ENCODE measurements at regions of chr19 and their contacts with region 1.

Region 1: GRCh38 chr19:53195265-53195903 is 2.2 kb upstream of the ZNF665 start:
- DNase-seq: peak; percentile 79 to 82 (median 80)
- H3K4me3 ChIP-seq: no peak overlapping the region
- H3K4me3 Mint-ChIP-seq: peak overlapping the region; percentile 26 to 99 (median 60)
- H3K27ac ChIP-seq: no peak overlapping the region
- H3K27ac Mint-ChIP-seq: peak overlapping the region; percentile 39 to 93 (median 75)
- H3K4me1 ChIP-seq: peaks cover 17% of the 10 kb centered on the region
- H3K4me1 Mint-ChIP-seq: peaks cover 20 to 60% (median 37%) of the 10 kb centered on the region in 4 donors
- H3K27me3 ChIP-seq: no peaks in the 10 kb centered on the region
- H3K27me3 Mint-ChIP-seq: peaks cover 0 to 1% of the 10 kb centered on the region in 2 donors

Region 2: GRCh38 chr19:52734893-52735661 is 460.3 kb before region 1 on chr19 and contains the start of gene ZNF611:
- CTCF ChIA-PET with region 1: no interaction called
- POLR2A ChIA-PET with region 1: no interaction called
- intact Hi-C with region 1: loop called (anchors 1 kb)
- DNase-seq: peak; percentile 98 to 99 (median 98)
- H3K4me3 ChIP-seq: peak within 1 kb of the TSS; percentile 94 to 98
- H3K4me3 Mint-ChIP-seq: peak within 1 kb of the TSS; percentile 90 to 97 (median 94)
- H3K27ac ChIP-seq: peak within 1 kb of the TSS; percentile 80
- H3K27ac Mint-ChIP-seq: peak within 1 kb of the TSS; percentile 94 to 98 (median 97)
- H3K4me1 ChIP-seq: peaks cover 22% of the 10 kb centered on the region
- H3K4me1 Mint-ChIP-seq: peaks cover 17 to 34% (median 25%) of the 10 kb centered on the region in 4 donors
- H3K27me3 ChIP-seq: no peaks in the 10 kb centered on the region
- H3K27me3 Mint-ChIP-seq: no peaks in the 10 kb centered on the region
- total RNA-seq, gene ZNF611: 52.8 to 53.7 TPM

Region 3: DNA sequence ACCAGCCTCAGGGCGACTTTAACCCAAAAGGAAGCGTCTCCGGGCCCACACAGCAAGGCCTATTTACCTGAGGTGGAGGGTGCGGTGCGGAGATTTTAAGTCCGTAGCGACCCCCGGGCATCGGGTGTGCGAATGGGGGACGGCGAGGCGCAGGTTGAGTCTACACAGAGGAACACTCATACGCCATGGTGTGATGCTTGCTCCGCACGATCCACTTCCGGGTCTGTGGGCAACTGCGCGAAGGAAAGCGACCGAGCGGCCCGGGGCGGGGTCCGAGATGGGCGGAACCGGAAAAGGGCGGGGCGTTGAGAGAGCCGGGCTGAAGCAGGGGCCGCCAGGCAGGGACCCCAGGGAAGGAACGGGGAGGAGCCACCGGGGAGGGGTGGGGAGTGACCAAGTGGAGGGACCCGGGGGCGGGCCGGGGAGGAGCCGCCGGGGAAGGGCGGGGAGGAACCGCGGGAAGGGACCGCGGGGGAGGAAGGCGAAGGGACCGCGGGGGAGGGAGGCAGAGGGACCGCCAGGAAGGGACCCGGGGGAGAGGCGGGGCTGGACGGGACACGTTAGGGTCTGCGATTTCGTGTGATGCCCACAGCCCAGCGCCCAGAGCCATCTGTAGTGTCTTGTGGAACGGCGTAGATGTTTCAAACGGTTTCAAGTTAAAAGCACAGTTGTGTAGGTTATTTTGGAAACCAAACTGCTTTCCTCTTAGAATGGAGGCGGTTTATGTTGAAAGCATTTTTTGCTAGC is 92.0 kb before region 1 on chr19 and contains the start of gene ZNF160:
- CTCF ChIA-PET with region 1: no interaction called
- POLR2A ChIA-PET with region 1: no interaction called
- intact Hi-C with region 1: loop called (anchors 1 kb)
- DNase-seq: peak; percentile 97 to 98 (median 97)
- H3K4me3 ChIP-seq: peak within 1 kb of the TSS; percentile 92 to 96
- H3K4me3 Mint-ChIP-seq: peak within 1 kb of the TSS; percentile 87 to 96 (median 95)
- H3K27ac ChIP-seq: peak within 1 kb of the TSS; percentile 84
- H3K27ac Mint-ChIP-seq: peak within 1 kb of the TSS; percentile 91 to 98 (median 95)
- H3K4me1 ChIP-seq: peaks cover 27% of the 10 kb centered on the region
- H3K4me1 Mint-ChIP-seq: peaks cover 20 to 46% (median 32%) of the 10 kb centered on the region in 4 donors
- H3K27me3 ChIP-seq: no peaks in the 10 kb centered on the region
- H3K27me3 Mint-ChIP-seq: no peaks in the 10 kb centered on the region
- total RNA-seq, gene ZNF160: 72.0 to 81.1 TPM

Region 4: DNA sequence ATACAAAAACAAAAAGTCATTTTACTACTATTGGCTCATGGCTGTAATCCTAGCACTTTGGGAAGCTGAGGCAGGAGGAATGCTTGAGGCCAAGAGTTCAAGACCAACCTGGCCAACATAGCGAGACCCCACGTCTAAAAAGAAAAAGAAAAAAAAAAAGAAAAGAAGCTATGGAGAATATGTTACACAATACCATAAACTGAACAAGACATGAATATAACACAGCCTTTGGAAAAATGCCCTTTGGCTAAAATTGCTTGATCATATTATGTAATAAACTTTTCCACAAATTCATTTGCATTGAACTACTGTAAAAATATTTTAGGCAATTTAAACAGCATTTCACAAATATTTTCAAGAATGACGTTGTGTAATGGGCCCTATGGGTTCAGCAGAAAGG is 59.0 kb before region 1 on chr19:
- CTCF ChIA-PET with region 1: no interaction called
- POLR2A ChIA-PET with region 1: no interaction called
- intact Hi-C with region 1: no loop called
- DNase-seq: no peak
- H3K4me3 ChIP-seq: no peak overlapping the region
- H3K4me3 Mint-ChIP-seq: no peak overlapping the region
- H3K27ac ChIP-seq: no peak overlapping the region
- H3K27ac Mint-ChIP-seq: no peak overlapping the region
- H3K4me1 ChIP-seq: no peaks in the 10 kb centered on the region
- H3K4me1 Mint-ChIP-seq: peaks cover 0 to 8% (median 4%) of the 10 kb centered on the region in 4 donors
- H3K27me3 ChIP-seq: no peaks in the 10 kb centered on the region
- H3K27me3 Mint-ChIP-seq: peaks cover 3 to 4% of the 10 kb centered on the region in 2 donors

Region 5: GRCh38 chr19:53333463-53334449 is 138.4 kb after region 1 on chr19 and contains the start of gene ZNF845:
- CTCF ChIA-PET with region 1: interaction called, 4 read pairs
- POLR2A ChIA-PET with region 1: interaction called, 4 read pairs
- intact Hi-C with region 1: loop called (anchors 1 kb)
- DNase-seq: peak; percentile 93 to 99 (median 95)
- H3K4me3 ChIP-seq: peak within 1 kb of the TSS; percentile 90 to 99
- H3K4me3 Mint-ChIP-seq: peak within 1 kb of the TSS; percentile 89 to 98 (median 95)
- H3K27ac ChIP-seq: peak within 1 kb of the TSS; percentile 64
- H3K27ac Mint-ChIP-seq: peak within 1 kb of the TSS; percentile 89 to 97 (median 94)
- H3K4me1 ChIP-seq: peaks cover 14% of the 10 kb centered on the region
- H3K4me1 Mint-ChIP-seq: peaks cover 13 to 35% (median 21%) of the 10 kb centered on the region in 4 donors
- H3K27me3 ChIP-seq: no peaks in the 10 kb centered on the region
- H3K27me3 Mint-ChIP-seq: peaks cover 4% of the 10 kb centered on the region in 2 donors
- total RNA-seq, gene ZNF845: 18.0 to 19.4 TPM

Region 6: DNA sequence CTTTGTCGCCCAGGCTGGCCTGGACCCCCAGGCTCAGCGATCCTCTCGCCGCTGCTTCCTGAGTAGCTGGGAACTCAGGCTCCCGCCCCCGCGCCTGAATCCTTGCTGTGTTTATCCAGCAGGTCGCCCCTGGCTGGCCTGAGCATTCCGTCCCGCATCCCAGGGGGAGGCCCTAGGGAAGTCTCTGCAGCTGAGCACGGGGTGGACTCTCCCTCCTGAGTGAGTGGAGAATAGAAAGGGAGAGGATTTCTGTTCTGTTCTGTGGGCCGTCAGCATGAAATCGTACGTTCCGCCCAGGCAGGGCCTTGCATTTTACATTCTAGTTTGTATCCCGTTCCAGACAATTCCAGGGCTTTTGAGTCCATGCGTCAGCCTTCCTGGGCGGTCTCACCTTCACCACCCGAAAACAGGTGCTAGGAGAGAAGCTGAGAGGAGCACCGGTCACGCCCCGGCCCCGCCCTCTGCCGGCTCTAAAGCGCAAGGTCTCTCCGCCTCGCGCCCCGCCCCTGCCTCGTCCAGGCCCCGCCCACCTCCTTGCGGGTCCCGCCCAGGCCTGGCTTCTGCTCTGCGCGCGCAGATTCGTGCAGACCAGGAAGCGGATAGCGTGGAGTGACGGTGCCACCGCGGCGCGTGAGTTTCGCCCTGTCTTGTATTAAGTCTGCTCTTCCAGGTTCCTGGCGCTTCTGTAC is 236.2 kb after region 1 on chr19 and contains the start of gene ZNF761:
- CTCF ChIA-PET with region 1: interaction called, 3 read pairs
- POLR2A ChIA-PET with region 1: no interaction called
- intact Hi-C with region 1: loop called (anchors 1 kb)
- DNase-seq: peak; percentile 95 to 99 (median 97)
- H3K4me3 ChIP-seq: peak within 1 kb of the TSS; percentile 77 to 80
- H3K4me3 Mint-ChIP-seq: peak within 1 kb of the TSS; percentile 97 to 100 (median 98)
- H3K27ac ChIP-seq: peak within 1 kb of the TSS; percentile 68
- H3K27ac Mint-ChIP-seq: peak within 1 kb of the TSS; percentile 92 to 99 (median 97)
- H3K4me1 ChIP-seq: peaks cover 15% of the 10 kb centered on the region
- H3K4me1 Mint-ChIP-seq: peaks cover 17 to 45% (median 30%) of the 10 kb centered on the region in 4 donors
- H3K27me3 ChIP-seq: no peaks in the 10 kb centered on the region
- H3K27me3 Mint-ChIP-seq: no peaks in the 10 kb centered on the region
- total RNA-seq, gene ZNF761: 18.3 to 20.2 TPM

Region 7: DNA sequence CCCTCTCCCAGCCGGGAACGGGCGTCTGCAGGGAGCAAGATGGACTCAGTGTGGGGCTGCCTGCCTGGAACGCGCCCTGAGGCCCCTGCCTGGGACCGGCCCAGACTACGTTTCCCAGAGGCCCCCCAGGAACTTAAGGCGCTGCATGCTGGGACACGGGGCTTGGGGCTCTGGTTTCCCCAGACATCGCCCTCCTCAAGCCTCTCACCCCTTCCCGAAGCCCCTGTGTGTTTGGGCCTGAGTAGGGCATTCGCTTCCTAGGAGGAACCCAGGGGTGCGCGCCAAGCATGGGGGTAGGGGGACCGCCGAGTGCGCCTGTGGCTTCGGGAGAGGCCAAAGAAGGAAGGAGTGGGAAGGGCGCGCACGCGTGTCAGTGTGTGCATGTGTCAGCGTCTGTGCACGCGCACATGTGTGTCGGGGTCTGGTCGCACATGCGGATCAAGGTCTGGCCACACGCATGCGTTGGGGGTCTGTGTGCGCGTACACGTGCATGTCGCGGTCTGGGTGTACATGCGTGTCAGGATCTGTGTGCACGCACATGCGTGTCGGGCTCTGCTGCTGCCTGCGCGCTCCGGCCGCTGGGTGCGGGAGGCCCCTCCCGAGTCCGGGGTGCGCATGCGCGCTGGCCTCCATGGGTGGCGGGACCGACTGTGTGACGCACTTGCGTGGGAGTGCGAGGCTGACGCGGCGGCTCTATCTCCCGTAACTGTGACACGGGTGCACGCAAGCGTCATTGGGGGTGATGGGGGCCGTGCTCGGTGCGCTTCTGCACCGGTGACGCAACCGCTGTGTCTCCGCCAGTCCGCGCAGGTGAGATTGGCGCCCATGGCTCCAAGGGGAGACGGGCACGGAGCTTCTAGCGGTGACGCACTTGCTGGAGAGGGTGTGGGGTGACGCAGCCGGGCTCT is 358.8 kb after region 1 on chr19:
- CTCF ChIA-PET with region 1: no interaction called
- POLR2A ChIA-PET with region 1: no interaction called
- intact Hi-C with region 1: loop called (anchors 1 kb)
- DNase-seq: peak; percentile 91 to 97 (median 96)
- H3K4me3 ChIP-seq: peak overlapping the region; percentile 36 to 66
- H3K4me3 Mint-ChIP-seq: peak overlapping the region; percentile 97 to 99 (median 98)
- H3K27ac ChIP-seq: peak overlapping the region; percentile 94
- H3K27ac Mint-ChIP-seq: peak overlapping the region; percentile 98 to 100 (median 100)
- H3K4me1 ChIP-seq: peaks cover 14% of the 10 kb centered on the region
- H3K4me1 Mint-ChIP-seq: peaks cover 11 to 33% (median 21%) of the 10 kb centered on the region in 4 donors
- H3K27me3 ChIP-seq: no peaks in the 10 kb centered on the region
- H3K27me3 Mint-ChIP-seq: no peaks in the 10 kb centered on the region

Region 8: GRCh38 chr19:54023191-54023590 is 827.8 kb after region 1 on chr19:
- CTCF ChIA-PET with region 1: no interaction called
- POLR2A ChIA-PET with region 1: no interaction called
- intact Hi-C with region 1: loop called (anchors 5 kb)
- DNase-seq: no peak
- H3K4me3 ChIP-seq: no peak overlapping the region
- H3K4me3 Mint-ChIP-seq: no peak overlapping the region
- H3K27ac ChIP-seq: no peak overlapping the region
- H3K27ac Mint-ChIP-seq: peak overlapping the region in 1 of 7 donors; percentile 29
- H3K4me1 ChIP-seq: peaks cover 5% of the 10 kb centered on the region
- H3K4me1 Mint-ChIP-seq: peaks cover 0 to 8% (median 2%) of the 10 kb centered on the region in 4 donors
- H3K27me3 ChIP-seq: no peaks in the 10 kb centered on the region
- H3K27me3 Mint-ChIP-seq: peaks cover 16 to 33% of the 10 kb centered on the region in 2 donors